Right ventricle myocardium inferior (tissue), 1 donor: ENCODE measurements at regions of chr4 and their contacts with region 1.

Region 1: DNA sequence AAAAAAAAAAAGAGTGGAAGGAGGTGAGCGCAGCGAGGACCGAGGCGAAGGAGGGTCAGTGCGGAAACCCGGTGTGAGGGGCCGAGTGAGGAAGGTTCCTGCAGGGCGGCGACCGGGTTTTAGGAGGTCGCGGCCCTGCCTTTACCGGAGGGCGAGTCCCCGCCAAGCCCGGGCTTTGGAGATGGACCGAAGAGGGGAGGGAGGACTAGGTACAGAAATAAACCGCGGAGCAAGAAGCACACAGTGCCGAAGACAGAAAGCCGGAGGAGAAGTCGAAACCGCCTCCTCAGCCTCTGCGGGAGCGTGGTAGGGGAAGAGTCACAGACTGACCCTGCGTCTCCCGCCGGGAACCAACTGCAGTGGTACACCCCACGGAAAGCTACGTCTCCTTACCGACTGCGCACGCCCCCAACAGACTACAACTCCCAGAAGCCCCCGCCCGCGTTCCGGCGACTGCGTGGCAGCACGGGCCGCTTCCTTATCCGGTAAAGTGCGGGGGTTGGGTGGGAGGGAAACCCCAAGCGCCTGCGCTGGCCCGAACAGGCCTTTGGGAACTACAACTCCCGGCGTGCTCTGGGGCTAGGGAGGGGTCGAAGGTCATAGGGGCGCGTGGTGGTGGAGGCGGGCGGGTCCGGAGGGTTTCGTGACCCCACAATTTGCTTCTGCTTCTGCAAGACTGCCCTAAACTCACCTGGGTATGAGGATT is at the start of gene NFXL1:
- DNase-seq: peak; percentile 99
- ATAC-seq: peak; percentile 100
- total RNA-seq, gene NFXL1: 3.9 TPM

Region 2: GRCh38 chr4:47463235-47463956 is 451.0 kb before region 1 on chr4 and contains the start of gene COMMD8:
- intact Hi-C with region 1: loop called (anchors 10 kb)
- DNase-seq: peak; percentile 99
- ATAC-seq: peak; percentile 99
- total RNA-seq, gene COMMD8: 17.2 TPM